IMR-90 (cell line): ENCODE measurements at regions of chr22 and their contacts with region 1.

Region 1: DNA sequence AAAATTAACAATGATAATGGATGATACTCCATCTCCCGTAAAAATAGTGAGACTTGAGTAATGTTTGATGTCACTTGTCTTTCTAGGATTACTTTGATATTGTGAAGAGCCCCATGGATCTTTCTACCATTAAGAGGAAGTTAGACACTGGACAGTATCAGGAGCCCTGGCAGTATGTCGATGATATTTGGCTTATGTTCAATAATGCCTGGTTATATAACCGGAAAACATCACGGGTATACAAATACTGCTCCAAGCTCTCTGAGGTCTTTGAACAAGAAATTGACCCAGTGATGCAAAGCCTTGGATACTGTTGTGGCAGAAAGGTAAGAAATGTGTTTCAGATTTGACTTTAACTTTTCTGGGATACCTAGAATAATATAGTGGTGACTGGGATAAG is 48.0 kb upstream of the L3MBTL2 start:
- DNase-seq: no peak
- ATAC-seq: no peak
- H3K4me3 ChIP-seq: no peak overlapping the region
- H3K27ac ChIP-seq: no peak overlapping the region
- H3K4me1 ChIP-seq: no peaks in the 10 kb centered on the region
- H3K27me3 ChIP-seq: no peaks in the 10 kb centered on the region
- CTCF ChIP-seq: no peak
- POLR2A ChIP-seq: no peak
- RAD21 ChIP-seq: no peak

Region 2: DNA sequence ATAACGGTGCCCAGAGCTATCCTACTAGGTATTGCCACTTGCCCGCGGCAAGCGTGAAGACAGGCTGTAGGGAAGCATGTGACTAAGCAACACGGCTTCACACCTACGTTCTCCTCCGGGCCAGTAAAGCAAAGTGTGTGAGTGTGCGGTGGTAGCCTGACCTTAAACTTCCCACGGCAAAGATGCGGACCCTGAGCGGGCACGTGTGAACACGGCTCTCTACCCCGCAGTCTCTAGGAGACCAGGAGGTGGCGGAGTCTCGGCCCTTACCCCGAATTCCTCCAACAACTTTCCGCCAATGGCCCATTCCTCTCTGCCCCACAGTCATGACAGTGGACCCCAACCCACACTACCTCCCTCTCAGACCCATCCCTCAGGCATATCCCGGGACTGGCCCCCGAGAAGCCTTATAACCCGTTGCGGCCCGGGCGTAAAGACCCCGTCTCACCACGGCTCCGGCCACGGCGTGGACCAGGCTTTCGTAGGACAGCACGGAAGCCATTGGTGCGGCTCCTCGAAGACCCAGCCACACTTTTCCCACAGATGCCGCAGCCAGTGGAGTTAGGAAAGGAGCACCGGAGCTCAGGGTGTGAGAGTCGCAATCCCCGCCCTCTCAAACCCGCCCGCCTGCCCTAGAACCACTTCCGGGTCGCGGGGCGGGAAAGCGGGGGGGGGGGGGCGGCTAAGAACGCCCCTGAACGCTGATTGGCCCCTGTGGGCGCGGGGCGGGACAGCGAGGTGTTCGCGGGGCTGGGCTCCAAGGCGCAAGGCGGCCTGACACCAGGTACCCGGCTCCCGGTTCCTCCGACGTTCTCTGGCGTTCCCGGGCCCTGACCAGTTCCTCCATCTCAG is 338.1 kb before region 1 on chr22 and contains the start of gene SLC25A17:
- CTCF ChIA-PET with region 1: no interaction called
- POLR2A ChIA-PET with region 1: no interaction called
- dilution Hi-C with region 1: no loop called
- in situ Hi-C with region 1: no loop called
- intact Hi-C with region 1: loop called (anchors 10 kb)
- DNase-seq: peak; percentile 69
- ATAC-seq: peak; percentile 97
- H3K4me3 ChIP-seq: peak within 1 kb of the TSS; percentile 90
- H3K27ac ChIP-seq: peak within 1 kb of the TSS; percentile 74
- H3K4me1 ChIP-seq: no peaks in the 10 kb centered on the region
- H3K27me3 ChIP-seq: no peaks in the 10 kb centered on the region
- CTCF ChIP-seq: peak; percentile 38
- POLR2A ChIP-seq: peak; percentile 65
- RAD21 ChIP-seq: peak; percentile 16; the same call in 1 of the 2 replicates
- total RNA-seq, gene SLC25A17: 31.7 and 36.0 TPM in 2 replicates

Region 3: GRCh38 chr22:40838486-40838885 is 318.6 kb before region 1 on chr22:
- CTCF ChIA-PET with region 1: no interaction called
- POLR2A ChIA-PET with region 1: no interaction called
- dilution Hi-C with region 1: no loop called
- in situ Hi-C with region 1: loop called (anchors 10 kb)
- intact Hi-C with region 1: no loop called
- DNase-seq: no peak
- ATAC-seq: no peak
- H3K4me3 ChIP-seq: no peak overlapping the region
- H3K27ac ChIP-seq: no peak overlapping the region
- H3K4me1 ChIP-seq: peaks cover 2% of the 10 kb centered on the region; the same call in 1 of the 2 replicates
- H3K27me3 ChIP-seq: no peaks in the 10 kb centered on the region
- CTCF ChIP-seq: no peak
- POLR2A ChIP-seq: no peak
- RAD21 ChIP-seq: no peak